GM18951 (cell line): ENCODE measurements at regions of chr7 and their contacts with region 1.

Region 1: DNA sequence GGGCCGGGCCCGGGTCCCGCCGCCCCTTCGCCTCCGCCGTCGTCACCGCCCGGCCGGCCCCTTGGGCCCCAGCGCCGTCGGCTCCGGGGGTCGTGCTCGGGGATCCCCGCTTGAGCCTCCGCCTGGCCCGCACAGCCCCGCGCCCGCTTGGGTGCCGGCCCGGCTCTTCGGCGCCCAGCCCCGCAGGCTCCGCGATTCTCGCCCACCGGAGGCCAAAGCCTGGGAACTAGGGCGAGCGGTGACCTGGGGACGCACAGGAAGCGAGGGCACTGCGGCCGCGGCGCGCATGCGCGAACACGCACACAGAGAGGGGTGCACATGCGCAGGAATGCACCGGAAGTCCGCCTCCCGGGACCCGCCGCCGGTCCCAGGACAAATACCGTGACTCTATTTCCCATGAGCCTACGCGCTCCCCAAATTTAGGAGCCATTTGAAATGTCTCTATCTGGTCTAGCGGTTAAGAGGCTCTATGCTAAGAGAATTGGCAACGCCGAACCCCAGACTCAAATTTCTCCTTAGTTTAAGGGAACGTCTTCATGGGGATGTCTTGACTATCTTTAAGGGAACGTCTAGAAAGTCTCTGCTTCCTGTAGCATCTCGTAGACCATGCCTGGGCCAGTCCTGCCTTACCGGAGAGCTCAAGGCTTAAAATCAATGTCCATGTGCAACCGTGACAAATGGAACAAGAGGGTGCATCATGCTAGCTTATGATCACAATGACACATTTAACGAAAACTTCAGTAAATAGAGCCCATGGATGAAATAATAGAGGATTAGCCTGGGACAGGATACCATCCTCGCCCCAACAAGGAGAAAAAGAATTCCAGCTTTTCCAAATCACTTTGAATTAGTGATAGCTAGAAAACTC is at the start of gene ZNF12:
- POLR2A ChIP-seq: peak; percentile 85

Region 2: GRCh38 chr7:6071406-6071805 is 635.5 kb before region 1 on chr7:
- in situ Hi-C with region 1: no loop called
- POLR2A ChIP-seq: no peak

Region 3: DNA sequence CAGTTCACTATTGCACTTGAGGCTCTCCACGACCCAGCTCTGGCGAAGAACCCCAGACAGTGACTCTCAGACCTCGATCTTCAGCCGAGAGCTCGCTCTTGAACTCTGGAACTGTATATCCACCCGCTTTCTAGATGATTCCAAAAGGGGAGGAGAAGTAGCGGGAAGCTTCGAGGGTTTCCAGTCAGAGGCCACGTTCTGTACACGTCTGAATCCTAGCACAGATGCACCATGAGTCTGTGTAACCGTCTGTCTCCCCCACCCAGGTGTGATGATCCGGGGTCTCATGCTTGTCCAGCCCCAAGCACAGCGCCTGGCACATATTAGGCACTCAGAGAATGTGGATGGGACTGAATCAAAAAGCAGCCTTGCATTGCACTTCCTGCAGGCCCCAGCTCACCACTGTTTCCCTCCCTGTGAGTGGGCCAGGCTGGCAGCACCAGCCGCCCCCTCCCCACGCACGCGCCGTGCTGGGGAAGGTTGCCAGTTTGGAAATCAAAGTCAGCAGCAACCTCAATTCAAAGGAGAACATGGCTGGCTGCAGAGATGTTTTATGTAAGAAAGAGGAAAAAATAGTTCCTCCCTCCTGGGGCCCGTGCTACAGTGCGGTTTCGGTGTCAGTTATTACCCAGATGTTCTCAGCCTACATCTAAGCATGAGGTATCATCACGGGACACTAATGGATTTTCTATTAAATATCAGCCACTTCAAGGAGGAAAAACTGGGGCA is 161.3 kb before region 1 on chr7:
- in situ Hi-C with region 1: no loop called
- POLR2A ChIP-seq: no peak

Region 4: GRCh38 chr7:6831018-6831725 is 124.3 kb after region 1 on chr7:
- in situ Hi-C with region 1: loop called (anchors 25 kb)
- POLR2A ChIP-seq: no peak

Region 5: GRCh38 chr7:6934986-6935385 is 228.1 kb after region 1 on chr7:
- in situ Hi-C with region 1: no loop called
- POLR2A ChIP-seq: no peak

Region 6: GRCh38 chr7:7017574-7018273 is 310.8 kb after region 1 on chr7:
- in situ Hi-C with region 1: no loop called
- POLR2A ChIP-seq: no peak